MCF 10A (cell line): ENCODE measurements at regions of chr3 and their contacts with region 1.

Region 1: GRCh38 chr3:149384911-149385321 is 7.5 kb upstream of the TM4SF1 start:
- DNase-seq: peak; percentile 88
- H3K4me3 Mint-ChIP-seq: no peak overlapping the region
- H3K27ac Mint-ChIP-seq: peak overlapping the region; percentile 98
- H3K4me1 Mint-ChIP-seq: peaks cover 49% of the 10 kb centered on the region
- H3K27me3 Mint-ChIP-seq: no peaks in the 10 kb centered on the region
- CTCF ChIP-seq: no peak

Region 2: DNA sequence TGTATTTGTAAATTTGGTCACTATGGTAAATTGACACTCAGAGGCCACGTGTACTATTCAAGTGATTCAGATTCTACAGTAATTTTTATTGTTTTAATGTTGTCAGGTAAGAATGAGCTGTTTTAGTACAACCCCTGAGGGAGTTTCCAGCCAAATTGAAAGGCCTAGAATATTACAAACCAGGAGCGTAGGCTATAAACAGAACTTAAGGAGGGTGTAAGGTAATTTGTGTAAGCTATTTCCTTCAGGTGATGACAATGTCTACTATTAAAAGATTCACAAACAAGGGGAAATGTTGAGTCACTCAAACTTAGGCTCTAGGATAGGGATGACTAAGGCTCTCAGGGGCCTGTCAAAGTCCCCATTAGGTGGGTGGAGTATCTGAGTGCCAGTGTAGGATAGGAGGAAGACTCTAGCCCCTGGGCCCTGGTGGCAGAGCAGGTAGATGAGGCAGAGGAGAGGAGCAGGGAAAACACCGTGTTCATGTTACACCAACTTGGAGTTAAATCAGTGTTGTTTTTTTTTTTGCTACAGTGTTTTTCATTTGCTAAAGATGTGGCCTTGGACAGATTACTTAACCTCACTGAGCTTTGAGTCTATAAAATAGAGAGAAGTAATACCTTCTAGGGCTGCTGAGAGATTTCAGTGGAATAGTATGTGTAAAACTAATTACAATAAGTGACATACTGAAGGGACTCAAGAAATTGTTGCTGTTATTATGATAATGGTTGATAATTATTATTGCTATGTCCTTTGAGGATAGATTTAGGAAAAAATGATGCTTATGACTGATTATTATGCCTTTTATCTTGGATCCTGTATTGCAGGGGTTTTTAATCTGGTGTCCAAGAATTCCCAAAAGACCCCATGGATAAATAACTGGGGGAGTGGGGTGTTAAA is 17.7 kb before region 1 on chr3:
- CTCF ChIA-PET with region 1: interaction called, 5 read pairs
- POLR2A ChIA-PET with region 1: interaction called, 217 read pairs
- intact Hi-C with region 1: no loop called
- DNase-seq: peak; percentile 90
- H3K4me3 Mint-ChIP-seq: no peak overlapping the region
- H3K27ac Mint-ChIP-seq: peak overlapping the region; percentile 77
- H3K4me1 Mint-ChIP-seq: peaks cover 31% of the 10 kb centered on the region
- H3K27me3 Mint-ChIP-seq: no peaks in the 10 kb centered on the region
- CTCF ChIP-seq: no peak

Region 3: GRCh38 chr3:149401215-149401925 is 16.5 kb after region 1 on chr3:
- CTCF ChIA-PET with region 1: interaction called, 5 read pairs
- POLR2A ChIA-PET with region 1: interaction called, 12 read pairs
- intact Hi-C with region 1: no loop called
- DNase-seq: peak; percentile 80
- H3K4me3 Mint-ChIP-seq: no peak overlapping the region
- H3K27ac Mint-ChIP-seq: peak overlapping the region; percentile 67
- H3K4me1 Mint-ChIP-seq: peaks cover 8% of the 10 kb centered on the region
- H3K27me3 Mint-ChIP-seq: no peaks in the 10 kb centered on the region
- CTCF ChIP-seq: no peak